GM10248 (cell line): ENCODE measurements at regions of chr11 and their contacts with region 1.

Region 1: DNA sequence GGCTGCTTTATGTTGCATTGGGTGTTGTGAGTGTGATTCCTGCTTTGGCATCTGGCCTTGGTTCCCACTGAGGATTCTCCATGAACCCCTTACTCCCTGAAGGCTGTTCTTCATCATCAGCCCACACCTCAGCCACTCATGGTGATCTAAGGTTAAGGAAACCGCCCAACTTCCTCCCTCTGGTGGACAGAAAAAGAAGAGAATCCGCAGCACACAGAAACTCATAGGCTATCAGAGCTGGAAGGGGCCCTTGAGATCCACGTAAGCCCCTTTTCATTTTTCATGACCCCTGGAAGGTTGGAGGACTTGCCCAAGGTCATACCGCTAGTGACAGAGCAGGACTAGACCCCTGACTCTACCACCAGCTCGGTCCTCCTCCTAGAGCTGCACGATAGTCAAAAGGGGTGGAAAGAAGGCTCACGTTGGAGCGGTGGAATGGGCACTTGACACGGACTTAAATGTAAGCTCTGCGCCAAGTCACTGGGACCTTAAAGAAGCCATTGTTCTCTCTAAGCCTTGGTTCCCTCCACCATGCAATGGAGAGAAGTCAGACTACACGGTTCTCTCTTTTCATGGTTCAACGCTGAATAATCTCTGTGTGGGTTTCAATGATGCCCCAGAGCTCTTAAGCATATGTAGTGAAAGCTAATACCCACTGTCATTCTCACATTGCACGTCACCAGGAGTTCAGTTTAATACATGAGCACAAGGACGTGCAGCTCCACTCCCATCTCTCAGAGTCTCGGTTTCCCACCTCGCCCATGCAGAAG is 83.6 kb upstream of the CRTAM start:
- DNase-seq: peak; percentile 50
- CTCF ChIP-seq: peak; percentile 57

Region 2: GRCh38 chr11:122398167-122398566 is 356.6 kb before region 1 on chr11:
- CTCF ChIA-PET with region 1: no interaction called
- POLR2A ChIA-PET with region 1: no interaction called
- DNase-seq: no peak
- CTCF ChIP-seq: no peak

Region 3: DNA sequence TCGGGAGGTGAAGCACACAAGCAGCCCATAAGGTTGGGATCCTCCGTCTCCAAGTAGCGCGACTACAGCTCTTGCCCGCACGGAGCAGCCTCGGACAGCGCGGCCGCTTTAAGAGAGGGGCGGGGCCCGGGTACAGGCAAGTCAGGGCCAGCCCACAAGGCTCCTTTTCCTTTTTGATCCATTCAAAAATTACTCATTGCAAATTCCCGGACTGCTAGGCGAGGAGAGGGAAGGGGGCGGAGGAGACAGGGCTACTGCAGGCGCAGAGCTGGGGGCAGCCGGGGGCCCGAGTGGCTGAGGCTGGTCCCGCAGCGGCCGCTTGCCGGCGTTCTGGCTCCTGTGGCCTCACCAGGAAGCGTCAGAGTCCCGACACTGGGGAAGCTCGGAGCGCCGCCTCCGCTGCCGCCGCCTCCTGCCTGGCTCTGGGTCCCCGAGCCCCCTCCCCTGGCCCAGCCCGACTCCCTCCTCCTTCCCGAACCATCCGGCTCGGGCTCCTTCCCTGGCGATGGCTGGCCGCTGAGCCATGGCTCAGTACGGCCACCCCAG is 99.1 kb before region 1 on chr11 and contains the start of gene UBASH3B:
- CTCF ChIA-PET with region 1: interaction called, 29 read pairs
- POLR2A ChIA-PET with region 1: no interaction called
- DNase-seq: peak; percentile 68
- CTCF ChIP-seq: peak; percentile 16

Region 4: GRCh38 chr11:122697636-122698167 is 57.0 kb before region 1 on chr11:
- CTCF ChIA-PET with region 1: interaction called, 19 read pairs
- POLR2A ChIA-PET with region 1: no interaction called
- DNase-seq: peak; percentile 69
- CTCF ChIP-seq: no peak

Region 5: DNA sequence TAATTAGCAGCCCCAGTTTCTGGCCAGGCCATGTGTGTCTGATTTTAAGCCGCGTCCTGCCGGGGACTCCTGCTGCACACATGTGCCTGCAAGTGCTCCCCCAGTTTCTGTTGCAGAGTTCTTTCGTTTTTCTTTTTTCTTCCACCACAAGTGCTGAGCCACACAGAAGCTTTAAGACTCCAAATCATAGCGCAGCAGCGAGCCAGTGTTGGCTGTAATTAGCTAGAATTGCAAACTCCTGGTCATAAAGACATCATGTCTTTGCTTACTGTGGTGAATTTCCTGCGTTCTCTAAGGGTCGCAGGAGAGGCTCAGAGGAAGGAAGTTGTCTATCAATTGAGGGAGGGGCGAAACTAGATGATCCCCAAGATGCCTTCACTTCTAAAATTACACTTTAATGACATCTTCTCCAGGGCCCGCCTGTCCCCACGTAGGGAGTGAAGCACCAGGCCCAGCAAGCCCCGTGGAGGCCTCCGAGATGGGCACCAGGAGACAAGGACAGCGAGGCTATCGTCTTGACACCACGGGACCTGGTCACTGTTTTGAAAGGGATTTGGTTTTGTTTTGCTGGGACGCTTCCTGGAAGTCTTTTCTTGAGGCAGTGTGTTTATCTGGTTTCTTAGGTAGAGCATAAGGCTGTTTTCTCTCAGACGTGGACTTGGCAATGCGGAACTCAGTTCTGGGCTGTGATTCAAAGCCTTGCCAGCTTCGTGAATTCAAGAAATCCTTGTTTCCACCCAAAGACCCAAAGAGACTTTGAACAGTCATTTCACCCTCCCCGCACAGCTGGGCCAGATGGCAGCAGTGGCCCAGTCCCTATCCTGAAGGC is 27.4 kb before region 1 on chr11:
- CTCF ChIA-PET with region 1: interaction called, 13 read pairs
- POLR2A ChIA-PET with region 1: no interaction called
- DNase-seq: peak; percentile 66
- CTCF ChIP-seq: no peak

Region 6: DNA sequence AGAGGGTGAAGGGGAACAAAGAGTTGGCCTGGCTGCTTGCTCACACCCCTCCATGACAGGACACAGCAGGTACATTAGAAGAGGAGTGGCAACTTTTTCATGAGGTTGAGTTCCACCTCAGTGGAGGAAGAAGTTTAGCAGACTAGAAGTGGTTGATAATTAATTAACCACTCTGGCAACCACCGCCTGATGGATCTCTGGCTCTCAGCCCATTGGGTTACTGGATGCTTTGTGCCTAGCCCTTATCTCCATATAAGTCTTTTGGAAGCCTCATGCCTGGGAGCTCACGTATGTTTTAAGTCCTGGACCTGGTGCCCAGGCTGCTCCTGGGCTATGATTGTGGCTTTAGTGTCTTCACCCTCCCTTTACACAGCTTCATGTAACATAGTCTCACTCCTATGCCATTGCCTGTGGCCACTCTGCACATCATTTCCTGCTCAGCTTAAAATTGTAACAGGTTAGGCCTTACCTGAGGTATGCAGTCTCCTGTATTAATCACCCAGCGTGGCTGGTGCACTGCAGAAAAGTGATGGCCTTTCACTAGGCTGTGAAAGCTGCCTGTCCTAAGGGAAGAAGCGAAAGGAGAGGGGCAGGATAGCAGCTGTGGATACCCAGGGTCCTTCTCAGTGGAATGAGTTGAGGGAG is 10.9 kb after region 1 on chr11:
- CTCF ChIA-PET with region 1: interaction called, 37 read pairs
- POLR2A ChIA-PET with region 1: no interaction called
- DNase-seq: no peak
- CTCF ChIP-seq: no peak

Region 7: GRCh38 chr11:122781378-122782195 is 26.8 kb after region 1 on chr11:
- CTCF ChIA-PET with region 1: interaction called, 30 read pairs
- POLR2A ChIA-PET with region 1: no interaction called
- DNase-seq: peak; percentile 82
- CTCF ChIP-seq: peak; percentile 86